ENCODE measurements at regions of chr1 and their contacts with region 1.

Region 1: DNA sequence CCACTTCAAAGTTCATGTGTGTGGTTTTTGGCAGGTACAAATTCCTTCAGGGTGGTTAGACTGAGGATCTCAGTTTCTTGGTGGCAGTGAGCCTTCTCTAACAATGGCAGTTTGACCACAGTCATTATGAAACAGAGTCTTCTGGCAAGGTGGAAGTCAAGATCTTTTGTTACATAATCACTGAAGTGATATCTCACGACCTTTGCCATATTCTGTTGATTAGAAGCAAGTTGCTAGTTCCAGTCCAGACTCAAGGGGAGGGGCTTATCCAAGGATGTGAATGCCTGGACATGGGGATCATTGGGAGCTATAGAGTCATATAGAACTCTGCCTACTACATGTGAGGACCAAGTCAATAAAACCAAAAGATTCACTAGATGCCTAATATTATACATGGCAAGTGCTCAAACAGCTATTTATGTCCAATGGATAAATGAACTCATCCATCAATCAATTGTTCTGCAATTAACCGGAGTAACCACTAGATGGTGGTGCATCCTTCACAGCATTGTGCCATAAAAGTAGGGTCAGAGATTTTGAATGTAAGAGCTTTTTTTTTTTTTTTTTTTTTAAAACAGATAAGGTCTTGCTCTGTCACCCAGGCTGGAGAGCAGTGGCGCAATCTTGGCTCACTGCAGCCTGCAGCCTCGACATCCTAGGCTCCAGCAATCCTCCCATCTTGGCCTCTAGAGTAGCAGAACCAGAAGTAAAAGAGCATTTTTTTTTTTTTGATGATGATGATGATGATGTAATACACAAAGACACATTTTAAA is 131.9 kb downstream of the CRB1 start:
- DNase-seq: peak; percentile 23 to 58
- H3K4me3 ChIP-seq: no peak overlapping the region
- H3K27ac ChIP-seq: no peak overlapping the region
- H3K4me1 ChIP-seq: no peaks in the 10 kb centered on the region
- H3K27me3 ChIP-seq: no peaks in the 10 kb centered on the region
- CTCF ChIP-seq: peak; percentile 71

Region 2: GRCh38 chr1:196774603-196775002 is 625.3 kb before region 1 on chr1 and contains the start of gene CFHR3:
- CTCF ChIA-PET with region 1: interaction called, 10 read pairs
- POLR2A ChIA-PET with region 1: no interaction called
- intact Hi-C with region 1: no loop called
- DNase-seq: no peak
- H3K4me3 ChIP-seq: no peak within 1 kb of the TSS
- H3K27ac ChIP-seq: no peak within 1 kb of the TSS
- H3K4me1 ChIP-seq: no peaks in the 10 kb centered on the region
- H3K27me3 ChIP-seq: no peaks in the 10 kb centered on the region
- CTCF ChIP-seq: no peak
- total RNA-seq, gene CFHR3: 0.28 TPM in 1 of 2 replicates, not detected in the other

Region 3: DNA sequence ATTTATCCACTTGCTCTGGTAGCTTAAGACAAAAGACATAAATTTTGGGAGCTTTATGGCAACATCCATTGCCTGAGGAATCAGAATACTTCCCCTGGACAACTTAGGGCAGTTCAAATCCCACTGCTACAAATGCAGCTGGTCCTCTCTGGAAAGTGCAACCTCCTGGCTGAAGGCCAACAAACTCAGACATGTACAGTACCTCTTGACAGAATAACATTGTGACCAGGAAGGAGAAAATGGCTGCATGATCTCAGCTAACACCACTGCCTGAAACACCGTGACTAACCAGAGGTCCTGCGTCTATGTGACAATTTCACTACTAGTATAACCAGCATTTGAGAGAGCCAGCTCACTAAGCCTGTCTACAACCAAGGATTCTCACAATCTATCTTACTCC is 87.0 kb after region 1 on chr1:
- CTCF ChIA-PET with region 1: interaction called, 10 read pairs
- POLR2A ChIA-PET with region 1: no interaction called
- intact Hi-C with region 1: no loop called
- DNase-seq: peak in 1 of 2 experiments; percentile 5
- H3K4me3 ChIP-seq: no peak overlapping the region
- H3K27ac ChIP-seq: no peak overlapping the region
- H3K4me1 ChIP-seq: peaks cover 8% of the 10 kb centered on the region
- H3K27me3 ChIP-seq: no peaks in the 10 kb centered on the region
- CTCF ChIP-seq: no peak

Region 4: GRCh38 chr1:197521118-197521739 is 121.3 kb after region 1 on chr1:
- CTCF ChIA-PET with region 1: no interaction called
- POLR2A ChIA-PET with region 1: no interaction called
- intact Hi-C with region 1: loop called (anchors 2 kb)
- DNase-seq: peak in 1 of 2 experiments; percentile 1
- H3K4me3 ChIP-seq: no peak overlapping the region
- H3K27ac ChIP-seq: no peak overlapping the region
- H3K4me1 ChIP-seq: no peaks in the 10 kb centered on the region
- H3K27me3 ChIP-seq: no peaks in the 10 kb centered on the region
- CTCF ChIP-seq: peak; percentile 77